Naive thymus-derived CD4-positive, alpha-beta T cell (primary cell): ENCODE measurements at regions of chr2 and their contacts with region 1.

Region 1: GRCh38 chr2:180980106-180980942 is at the start of gene UBE2E3:
- DNase-seq: peak; percentile 74 to 85 (median 79)
- ATAC-seq: peak; percentile 87
- H3K4me3 ChIP-seq: peak within 1 kb of the TSS; percentile 67
- H3K4me3 Mint-ChIP-seq: peak within 1 kb of the TSS; percentile 91 to 99 (median 96)
- H3K27ac ChIP-seq: peak within 1 kb of the TSS; percentile 62
- H3K27ac Mint-ChIP-seq: peak within 1 kb of the TSS; percentile 94 to 98 (median 98)
- H3K4me1 ChIP-seq: peaks cover 20 to 26% of the 10 kb centered on the region in 2 donors
- H3K4me1 Mint-ChIP-seq: peaks cover 25 to 51% (median 44%) of the 10 kb centered on the region in 7 donors
- H3K27me3 ChIP-seq: no peaks in the 10 kb centered on the region
- H3K27me3 Mint-ChIP-seq: peaks cover 0 to 46% (median 0%) of the 10 kb centered on the region in 5 donors
- total RNA-seq, gene UBE2E3: 21.7 to 33.4 (median 24.3) TPM

Region 2: GRCh38 chr2:179049546-179050311 is 1930.6 kb before region 1 on chr2 and contains the start of gene CCDC141:
- CTCF ChIA-PET with region 1: no interaction called
- POLR2A ChIA-PET with region 1: no interaction called
- intact Hi-C with region 1: loop called in 1 of 2 experiments (anchors 10 kb)
- DNase-seq: peak; percentile 7 to 57 (median 40)
- ATAC-seq: peak; percentile 78
- H3K4me3 ChIP-seq: peak within 1 kb of the TSS; percentile 56
- H3K4me3 Mint-ChIP-seq: peak within 1 kb of the TSS; percentile 79 to 97 (median 93)
- H3K27ac ChIP-seq: peak within 1 kb of the TSS; percentile 81
- H3K27ac Mint-ChIP-seq: peak within 1 kb of the TSS; percentile 89 to 99 (median 97)
- H3K4me1 ChIP-seq: peaks cover 4 to 36% of the 10 kb centered on the region in 2 donors
- H3K4me1 Mint-ChIP-seq: peaks cover 10 to 67% (median 52%) of the 10 kb centered on the region in 7 donors
- H3K27me3 ChIP-seq: no peaks in the 10 kb centered on the region
- H3K27me3 Mint-ChIP-seq: no peaks in the 10 kb centered on the region
- total RNA-seq, gene CCDC141: 11.6 to 39.2 (median 35.1) TPM

Region 3: DNA sequence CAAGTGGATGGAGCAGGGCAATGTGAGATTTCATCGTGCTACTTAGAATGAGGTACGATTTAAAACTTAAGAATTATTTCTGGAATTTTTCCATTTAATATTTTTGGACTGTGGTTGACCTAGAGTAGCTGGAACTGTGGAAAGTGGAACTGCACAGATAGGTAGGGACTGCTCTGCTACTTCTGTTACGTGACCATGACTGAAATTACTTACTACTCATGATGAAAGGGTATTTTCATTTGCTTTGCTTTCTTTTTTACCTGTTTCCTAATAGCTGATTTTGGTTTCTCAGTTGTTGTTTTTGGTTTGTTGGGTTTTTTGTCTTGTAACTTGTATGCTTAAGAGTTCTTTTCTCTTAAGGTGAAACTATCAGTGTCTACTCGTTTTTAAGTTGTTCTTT is 11.5 kb after region 1 on chr2:
- CTCF ChIA-PET with region 1: interaction called, 5 read pairs
- POLR2A ChIA-PET with region 1: interaction called, 13 read pairs
- intact Hi-C with region 1: no loop called
- DNase-seq: no peak
- ATAC-seq: no peak
- H3K4me3 ChIP-seq: no peak overlapping the region
- H3K4me3 Mint-ChIP-seq: no peak overlapping the region
- H3K27ac ChIP-seq: no peak overlapping the region
- H3K27ac Mint-ChIP-seq: no peak overlapping the region
- H3K4me1 ChIP-seq: no peaks in the 10 kb centered on the region
- H3K4me1 Mint-ChIP-seq: peaks cover 10 to 39% (median 24%) of the 10 kb centered on the region in 7 donors
- H3K27me3 ChIP-seq: no peaks in the 10 kb centered on the region
- H3K27me3 Mint-ChIP-seq: no peaks in the 10 kb centered on the region

Region 4: DNA sequence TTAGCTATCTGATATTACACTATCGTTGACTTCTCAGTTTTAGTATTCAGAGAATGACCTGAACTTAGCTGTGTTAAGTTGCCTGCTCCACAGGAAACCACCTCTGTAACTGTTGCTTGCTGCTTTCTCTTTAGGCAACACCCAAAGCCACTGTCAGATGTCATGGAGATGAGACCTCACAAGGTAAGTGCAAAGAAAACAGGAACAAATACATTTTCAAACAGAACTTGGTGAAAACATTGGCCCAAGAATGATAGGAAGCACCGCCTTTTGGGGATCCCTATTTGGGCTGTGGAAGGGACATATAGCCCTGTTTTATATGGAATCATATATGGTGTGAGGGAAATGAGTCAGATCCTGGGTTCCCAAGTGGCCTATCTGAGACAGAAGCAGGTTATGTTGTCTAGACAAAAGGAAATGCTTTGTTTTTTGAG is 143.5 kb after region 1 on chr2:
- CTCF ChIA-PET with region 1: no interaction called
- POLR2A ChIA-PET with region 1: no interaction called
- intact Hi-C with region 1: loop called in 1 of 2 experiments (anchors 5 kb)
- DNase-seq: peak in 8 of 9 donors; percentile 54 to 91 (median 83)
- ATAC-seq: peak; percentile 98
- H3K4me3 ChIP-seq: peak overlapping the region; percentile 37
- H3K4me3 Mint-ChIP-seq: peak overlapping the region; percentile 73 to 92 (median 82)
- H3K27ac ChIP-seq: peak overlapping the region; percentile 83
- H3K27ac Mint-ChIP-seq: peak overlapping the region; percentile 94 to 100 (median 98)
- H3K4me1 ChIP-seq: peaks cover 39 to 47% of the 10 kb centered on the region in 2 donors
- H3K4me1 Mint-ChIP-seq: peaks cover 27 to 81% (median 78%) of the 10 kb centered on the region in 7 donors
- H3K27me3 ChIP-seq: no peaks in the 10 kb centered on the region
- H3K27me3 Mint-ChIP-seq: no peaks in the 10 kb centered on the region

Region 5: GRCh38 chr2:181715033-181715630 is 734.8 kb after region 1 on chr2:
- CTCF ChIA-PET with region 1: no interaction called
- POLR2A ChIA-PET with region 1: no interaction called
- intact Hi-C with region 1: loop called in 1 of 2 experiments (anchors 1 kb)
- DNase-seq: peak; percentile 30 to 78 (median 64)
- ATAC-seq: peak; percentile 90
- H3K4me3 ChIP-seq: no peak overlapping the region
- H3K4me3 Mint-ChIP-seq: no peak overlapping the region
- H3K27ac ChIP-seq: no peak overlapping the region
- H3K27ac Mint-ChIP-seq: no peak overlapping the region
- H3K4me1 ChIP-seq: no peaks in the 10 kb centered on the region
- H3K4me1 Mint-ChIP-seq: no peaks in the 10 kb centered on the region
- H3K27me3 ChIP-seq: no peaks in the 10 kb centered on the region
- H3K27me3 Mint-ChIP-seq: peaks cover 0 to 11% (median 0%) of the 10 kb centered on the region in 5 donors